ENCODE measurements at regions of chr7 and their contacts with region 1.

Region 1: DNA sequence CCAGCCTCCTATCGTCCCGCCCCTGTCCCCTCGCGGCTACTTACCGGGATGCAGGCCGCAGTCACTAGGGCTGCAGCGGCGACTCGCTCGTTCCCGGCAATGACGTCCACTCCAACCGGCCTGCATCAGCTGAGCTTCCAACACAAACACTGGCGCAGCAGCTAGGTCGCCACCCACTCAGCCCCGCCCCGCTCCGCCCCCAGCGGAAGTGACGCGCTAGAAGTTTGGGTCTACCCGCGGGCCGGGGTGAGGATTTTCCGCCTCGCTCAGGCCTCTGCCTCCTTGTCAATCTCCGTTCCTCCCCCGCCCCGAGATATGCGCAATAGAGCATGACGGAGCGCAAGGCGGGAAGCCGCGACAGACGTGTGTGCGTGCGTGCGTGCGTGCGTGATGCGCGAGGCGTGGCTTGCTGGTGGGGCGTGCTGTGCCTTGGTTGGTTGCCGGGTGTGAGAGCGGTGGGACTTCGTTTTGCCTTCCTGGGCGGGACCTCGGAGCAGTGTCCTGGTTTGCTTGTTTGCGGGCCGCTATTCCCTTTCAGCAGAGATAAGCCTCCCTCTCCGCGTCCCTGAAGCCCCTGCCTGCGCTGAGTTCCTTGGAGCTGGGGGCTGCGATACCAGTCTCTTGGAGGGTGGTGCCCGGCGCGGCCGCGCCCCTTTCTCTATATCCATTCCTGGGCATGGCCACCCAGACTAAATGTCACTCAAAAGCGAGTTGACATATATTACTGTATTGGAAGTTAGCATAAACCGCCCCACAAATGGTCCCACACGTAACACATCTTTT is at the start of gene PNPLA8:
- DNase-seq: peak; percentile 100
- ATAC-seq: peak; percentile 94
- H3K4me3 ChIP-seq: peak within 1 kb of the TSS; percentile 64
- H3K4me1 ChIP-seq: peaks cover 16% of the 10 kb centered on the region
- CTCF ChIP-seq: peak; percentile 10
- total RNA-seq, gene PNPLA8: 20.8 to 32.3 (median 23.4) TPM

Region 2: DNA sequence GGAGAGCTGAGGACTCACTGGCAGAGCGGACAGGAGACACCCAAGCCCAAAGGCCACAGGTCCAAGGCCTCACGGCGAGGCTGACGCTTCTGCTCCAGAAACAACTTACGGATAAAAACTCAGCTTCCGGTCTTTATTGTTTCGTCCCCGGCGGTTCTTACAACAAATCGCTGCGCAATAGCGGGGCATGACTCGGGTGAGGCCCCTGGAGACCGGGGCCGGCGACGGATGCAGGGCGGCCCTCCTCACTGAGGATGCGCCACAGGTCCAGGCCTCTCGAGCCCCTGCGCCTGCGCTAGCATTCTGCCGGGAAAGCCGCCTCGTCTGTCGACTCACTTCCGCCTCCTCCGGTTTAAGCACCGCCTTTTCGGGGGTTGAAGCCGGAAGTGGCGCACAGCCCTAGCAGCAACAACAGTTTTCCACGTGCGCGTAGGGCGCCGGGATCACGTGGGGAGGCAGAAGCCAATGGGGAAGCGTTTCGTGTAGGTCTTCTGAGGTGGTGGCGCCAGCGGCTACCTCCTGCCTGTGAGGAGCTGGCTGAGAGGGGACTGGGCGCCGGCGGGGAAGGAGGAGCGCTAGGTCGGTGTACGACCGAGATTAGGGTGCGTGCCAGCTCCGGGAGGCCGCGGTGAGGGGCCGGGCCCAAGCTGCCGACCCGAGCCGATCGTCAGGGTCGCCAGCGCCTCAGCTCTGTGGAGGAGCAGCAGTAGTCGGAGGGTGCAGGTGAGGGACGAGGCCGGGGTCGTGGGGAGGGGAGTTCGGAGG is 43.4 kb after region 1 on chr7 and contains the starts of genes DNAJB9 and THAP5:
- intact Hi-C with region 1: loop called (anchors 2 to 5 kb)
- DNase-seq: peak; percentile 99 to 100 (median 99)
- ATAC-seq: peak; percentile 96
- H3K4me3 ChIP-seq: peak within 1 kb of the TSS; percentile 92
- H3K4me1 ChIP-seq: peaks cover 15% of the 10 kb centered on the region
- CTCF ChIP-seq: peak; percentile 37
- total RNA-seq, gene DNAJB9: 13.2 to 19.2 (median 16.6) TPM
- total RNA-seq, gene THAP5: 19.6 to 26.2 (median 20.2) TPM

Measured in mucosa of descending colon (tissue), 3 donors.